Common myeloid progenitor, CD34-positive (primary cell): ENCODE measurements at regions of chr3 and their contacts with region 1.

Region 1: GRCh38 chr3:188954590-188955208 is 217.1 kb upstream of the TPRG1 start:
- DNase-seq: peak; percentile 71 to 75 (median 75)
- H3K4me3 ChIP-seq: no peak overlapping the region
- H3K27ac ChIP-seq: no peak overlapping the region
- H3K4me1 ChIP-seq: no peaks in the 10 kb centered on the region
- H3K27me3 ChIP-seq: peaks cover 0 to 4% (median 0%) of the 10 kb centered on the region in 5 experiments

Region 2: DNA sequence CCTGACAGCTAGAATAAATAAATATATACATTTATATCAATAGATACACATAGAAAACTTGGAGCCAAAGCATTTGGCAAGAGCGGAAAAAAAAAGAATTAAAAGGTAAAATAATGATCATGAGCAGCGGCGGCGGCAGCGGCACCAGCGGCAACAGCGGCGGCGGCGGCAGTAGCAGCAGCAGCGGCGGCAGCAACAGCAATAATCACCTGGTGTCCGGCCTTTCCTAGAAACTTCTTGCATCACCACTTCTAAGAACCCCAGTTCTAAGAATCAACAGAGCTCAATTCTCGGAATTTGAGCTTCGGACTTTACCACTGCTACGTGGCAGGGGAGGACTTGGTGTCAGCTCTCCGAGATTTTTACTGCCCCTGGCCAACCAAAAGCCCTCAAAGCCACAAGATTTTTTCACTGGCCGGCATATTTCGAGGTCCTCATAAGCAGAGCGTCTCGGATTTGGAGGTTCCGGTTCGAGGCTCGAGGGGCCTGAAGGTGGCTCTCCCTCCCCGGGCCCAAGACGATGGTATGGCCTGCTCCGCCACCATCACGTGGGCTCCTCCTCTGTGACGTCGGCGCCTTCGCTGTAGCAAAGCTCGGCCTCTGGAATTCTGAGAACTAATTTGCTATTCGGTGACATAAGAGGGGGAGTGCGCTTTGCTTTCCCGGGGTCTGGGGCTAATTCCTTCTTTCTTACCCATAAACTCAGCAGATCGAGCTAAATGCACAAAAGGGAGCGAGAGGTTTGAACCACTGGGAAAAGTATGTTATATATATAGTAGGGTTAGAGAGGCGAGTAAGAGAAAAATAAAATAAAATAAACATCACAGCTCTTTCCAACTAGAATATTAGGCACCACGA is 1209.3 kb before region 1 on chr3 and contains the start of gene BCL6:
- CTCF ChIA-PET with region 1: interaction called, 332 read pairs
- POLR2A ChIA-PET with region 1: no interaction called
- DNase-seq: peak; percentile 95 to 97 (median 97)
- H3K4me3 ChIP-seq: peak within 1 kb of the TSS; percentile 82 to 98 (median 91)
- H3K27ac ChIP-seq: peak within 1 kb of the TSS; percentile 100
- H3K4me1 ChIP-seq: peaks cover 19 to 83% (median 44%) of the 10 kb centered on the region in 4 experiments
- H3K27me3 ChIP-seq: no peaks in the 10 kb centered on the region

Region 3: GRCh38 chr3:188817103-188817936 is 137.4 kb before region 1 on chr3:
- CTCF ChIA-PET with region 1: no interaction called
- POLR2A ChIA-PET with region 1: no interaction called
- DNase-seq: no peak
- H3K4me3 ChIP-seq: no peak overlapping the region
- H3K27ac ChIP-seq: no peak overlapping the region
- H3K4me1 ChIP-seq: peaks cover 0 to 8% (median 2%) of the 10 kb centered on the region in 4 experiments
- H3K27me3 ChIP-seq: no peaks in the 10 kb centered on the region

Region 4: DNA sequence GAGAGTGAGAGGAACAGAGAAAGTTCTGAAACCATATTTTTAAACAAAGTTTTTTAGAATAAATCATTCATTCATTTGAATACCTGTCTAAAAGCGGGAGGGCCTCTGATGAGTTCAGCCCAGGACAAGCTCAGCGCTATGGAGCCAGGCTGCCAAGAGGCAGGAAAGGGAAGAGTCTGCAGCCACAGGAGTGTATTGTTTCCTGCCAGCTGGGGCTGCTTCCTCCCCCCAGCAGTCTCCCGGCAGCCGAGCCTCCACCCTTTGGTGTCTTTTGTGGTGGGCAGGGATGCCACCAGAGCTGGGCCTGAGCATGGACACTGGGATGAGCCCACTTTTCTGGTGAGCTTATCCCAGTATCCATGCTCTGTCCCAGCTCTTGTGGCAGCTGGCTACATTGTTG is 17.6 kb after region 1 on chr3:
- CTCF ChIA-PET with region 1: interaction called, 33 read pairs
- POLR2A ChIA-PET with region 1: interaction called, 4 read pairs
- DNase-seq: peak; percentile 57 to 93 (median 89)
- H3K4me3 ChIP-seq: peak overlapping the region in 3 of 7 experiments; percentile 6 to 34 (median 20)
- H3K27ac ChIP-seq: no peak overlapping the region
- H3K4me1 ChIP-seq: peaks cover 19 to 43% (median 38%) of the 10 kb centered on the region in 4 experiments
- H3K27me3 ChIP-seq: peaks cover 0 to 8% (median 3%) of the 10 kb centered on the region in 5 experiments

Region 5: GRCh38 chr3:189139611-189139940 is 184.9 kb after region 1 on chr3:
- CTCF ChIA-PET with region 1: interaction called, 16 read pairs
- POLR2A ChIA-PET with region 1: no interaction called
- DNase-seq: no peak
- H3K4me3 ChIP-seq: no peak overlapping the region
- H3K27ac ChIP-seq: no peak overlapping the region
- H3K4me1 ChIP-seq: peaks cover 0 to 5% (median 2%) of the 10 kb centered on the region in 4 experiments
- H3K27me3 ChIP-seq: peaks cover 0 to 20% (median 8%) of the 10 kb centered on the region in 5 experiments